HEK293 (cell line): ENCODE measurements at regions of chr11 and their contacts with region 1.

Region 1: DNA sequence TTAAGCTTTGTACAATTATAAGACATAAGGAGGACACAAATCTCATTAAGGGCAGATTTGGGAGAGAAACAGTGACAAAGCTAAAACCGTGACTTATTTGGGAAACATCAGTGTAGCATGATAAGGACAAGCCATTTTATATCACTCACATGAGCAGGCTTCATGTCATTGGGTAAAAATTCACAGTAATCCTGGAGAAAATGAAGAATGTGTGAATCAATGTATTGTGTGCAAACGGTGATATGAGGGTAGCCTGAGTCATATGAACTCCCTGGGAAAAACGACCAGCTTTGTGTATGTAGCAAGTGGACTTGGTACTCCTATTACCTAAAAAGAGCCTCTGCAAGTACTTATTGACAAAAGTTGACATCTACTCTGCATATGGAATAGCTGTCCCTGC is 6.0 kb upstream of the TRIM34 start:
- H3K4me3 ChIP-seq: no peak overlapping the region
- H3K27ac ChIP-seq: no peak overlapping the region
- H3K4me1 ChIP-seq: no peaks in the 10 kb centered on the region
- CTCF ChIP-seq: no peak

Region 2: GRCh38 chr11:5514841-5515240 is 104.0 kb before region 1 on chr11:
- CTCF ChIA-PET with region 1: no interaction called
- POLR2A ChIA-PET with region 1: no interaction called
- H3K4me3 ChIP-seq: no peak overlapping the region
- H3K27ac ChIP-seq: no peak overlapping the region
- H3K4me1 ChIP-seq: no peaks in the 10 kb centered on the region
- CTCF ChIP-seq: no peak

Region 3: GRCh38 chr11:5550440-5551095 is 68.2 kb before region 1 on chr11:
- CTCF ChIA-PET with region 1: no interaction called
- POLR2A ChIA-PET with region 1: no interaction called
- H3K4me3 ChIP-seq: no peak overlapping the region
- H3K27ac ChIP-seq: no peak overlapping the region
- H3K4me1 ChIP-seq: no peaks in the 10 kb centered on the region
- CTCF ChIP-seq: no peak

Region 4: DNA sequence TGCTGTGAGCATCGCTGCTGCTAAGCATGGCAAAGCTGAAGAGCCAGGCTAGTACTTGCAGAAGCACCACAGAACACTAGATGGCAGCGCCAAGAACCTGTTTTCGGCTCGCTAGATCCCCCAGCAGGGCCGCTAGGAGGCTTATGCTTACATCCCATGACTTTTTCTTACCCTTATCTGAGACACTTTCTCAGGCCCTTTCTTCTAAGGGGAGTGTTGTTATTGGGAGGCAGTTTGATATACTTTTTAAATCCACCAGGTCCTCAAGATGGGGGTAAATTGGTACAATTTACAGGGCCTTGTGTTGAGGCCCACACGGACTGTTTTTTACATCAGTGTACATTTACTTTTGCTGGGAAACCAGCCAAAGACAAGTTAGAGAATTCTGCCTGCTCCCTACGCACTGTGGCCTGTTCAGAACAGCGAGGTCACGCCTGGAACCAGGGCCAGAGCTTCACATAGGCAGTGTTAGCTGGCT is 18.4 kb before region 1 on chr11:
- CTCF ChIA-PET with region 1: interaction called, 11 read pairs
- POLR2A ChIA-PET with region 1: interaction called, 4 read pairs
- H3K4me3 ChIP-seq: no peak overlapping the region
- H3K27ac ChIP-seq: no peak overlapping the region
- H3K4me1 ChIP-seq: no peaks in the 10 kb centered on the region
- CTCF ChIP-seq: peak; percentile 66